Breast epithelium (tissue), 4 donors: ENCODE measurements at regions of chr14 and their contacts with region 1.

Region 1: DNA sequence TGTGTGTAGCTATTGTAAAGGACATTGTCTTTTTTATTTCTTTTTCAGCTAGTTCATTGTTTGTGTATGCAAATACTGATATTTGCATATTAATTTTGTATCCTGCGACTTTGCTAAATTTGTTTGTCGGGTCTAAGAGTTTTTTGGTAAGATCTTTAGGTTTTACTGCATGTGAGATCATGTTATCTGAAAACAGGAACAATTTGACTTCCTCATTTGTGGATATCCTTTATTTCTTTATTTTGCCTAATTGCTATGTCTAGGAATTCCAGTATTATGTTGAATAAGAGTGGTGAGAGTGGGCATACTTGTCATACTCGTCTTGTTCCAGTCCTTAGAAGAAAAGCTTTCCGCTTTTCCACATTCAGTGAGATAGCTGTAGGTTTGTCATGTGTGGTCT is 28.8 kb downstream of the SIX4 start:
- DNase-seq: no peak
- H3K4me3 ChIP-seq: no peak overlapping the region
- H3K27ac ChIP-seq: no peak overlapping the region
- H3K4me1 ChIP-seq: no peaks in the 10 kb centered on the region
- H3K27me3 ChIP-seq: no peaks in the 10 kb centered on the region
- CTCF ChIP-seq: no peak
- POLR2A ChIP-seq: no peak

Region 2: DNA sequence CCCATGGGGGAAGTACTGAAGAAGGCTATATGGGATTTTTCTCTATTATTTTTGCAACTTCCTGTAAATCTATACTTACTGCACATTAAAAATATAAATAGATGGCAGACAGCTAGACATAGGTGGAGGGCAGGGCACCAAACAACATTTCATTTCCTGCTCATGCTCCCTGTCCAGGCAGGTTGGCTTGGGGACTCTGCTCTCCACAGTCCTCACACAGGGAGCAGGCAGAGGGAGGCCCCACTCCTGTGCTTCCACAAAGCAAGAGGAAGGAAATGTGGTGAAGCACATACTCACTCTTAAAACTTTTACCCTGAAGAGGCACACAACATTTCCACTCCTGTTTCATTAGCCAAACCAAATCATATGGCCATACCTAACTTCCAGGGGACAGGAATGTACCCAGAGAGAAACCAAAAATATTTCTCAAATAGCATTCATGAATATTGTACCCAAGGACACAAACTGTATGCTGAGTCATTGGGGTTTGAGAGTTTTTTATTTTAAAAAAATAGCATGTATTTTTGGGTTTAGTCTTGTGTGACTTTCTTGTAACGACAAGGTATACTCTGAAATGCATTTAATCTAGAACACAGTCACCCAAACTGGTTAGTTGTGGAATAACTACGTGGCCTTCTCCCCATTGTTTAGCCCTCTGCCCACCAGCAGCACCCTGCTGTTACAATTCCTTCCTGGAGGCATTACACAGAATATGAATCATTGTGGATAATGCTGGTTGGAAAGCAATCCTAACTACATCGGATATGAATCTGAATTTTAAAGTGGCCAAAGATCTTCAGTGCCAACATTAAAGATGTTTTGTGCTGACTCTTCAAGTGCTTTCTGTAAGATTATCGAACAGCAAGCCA is 865.6 kb before region 1 on chr14:
- intact Hi-C with region 1: loop called (anchors 10 kb)
- DNase-seq: no peak
- H3K4me3 ChIP-seq: no peak overlapping the region
- H3K27ac ChIP-seq: no peak overlapping the region
- H3K4me1 ChIP-seq: no peaks in the 10 kb centered on the region
- H3K27me3 ChIP-seq: no peaks in the 10 kb centered on the region
- CTCF ChIP-seq: no peak
- POLR2A ChIP-seq: no peak

Region 3: GRCh38 chr14:60684203-60684602 is 11.1 kb before region 1 on chr14:
- intact Hi-C with region 1: loop called (anchors 1 kb)
- DNase-seq: no peak
- H3K4me3 ChIP-seq: no peak overlapping the region
- H3K27ac ChIP-seq: no peak overlapping the region
- H3K4me1 ChIP-seq: no peaks in the 10 kb centered on the region
- H3K27me3 ChIP-seq: no peaks in the 10 kb centered on the region
- CTCF ChIP-seq: no peak
- POLR2A ChIP-seq: no peak